ENCODE measurements at regions of chr4 and their contacts with region 1.

Region 1: DNA sequence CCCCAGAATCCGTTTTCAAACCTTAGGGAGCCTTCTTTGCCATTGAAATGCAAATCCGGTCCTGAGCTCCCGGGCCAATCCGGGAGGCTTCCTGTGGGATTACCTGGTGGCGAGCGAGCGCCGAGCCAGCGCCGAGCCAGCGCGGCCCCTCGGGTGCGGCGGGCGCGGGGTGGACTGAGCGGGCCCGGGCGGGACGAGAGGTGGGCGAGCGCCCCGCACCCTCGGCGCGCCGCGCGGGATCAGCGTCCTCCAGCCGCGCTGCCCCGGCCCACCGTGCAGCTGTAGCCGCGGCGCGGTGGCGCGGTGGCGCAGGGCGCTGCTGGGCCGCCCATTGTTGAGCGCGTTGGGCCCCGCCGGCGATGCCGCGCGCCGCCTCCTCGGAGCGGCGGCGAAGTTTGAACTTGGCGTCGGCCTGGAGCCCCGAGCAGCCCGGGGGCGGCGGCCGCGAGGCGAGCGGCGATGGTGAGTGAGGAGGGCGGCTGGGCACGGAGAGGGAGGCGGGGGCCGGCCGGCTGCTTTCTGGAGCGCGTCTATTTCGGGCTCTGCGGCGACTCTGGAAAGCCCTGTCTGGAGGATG is 208.6 kb downstream of the SOWAHB start:
- DNase-seq: peak; percentile 78
- H3K4me3 ChIP-seq: peak overlapping the region; percentile 79 to 81
- H3K27ac ChIP-seq: peak overlapping the region; percentile 78 to 99
- H3K4me1 ChIP-seq: peaks cover 12 to 28% of the 10 kb centered on the region in 2 experiments
- H3K27me3 ChIP-seq: no peaks in the 10 kb centered on the region
- CTCF ChIP-seq: no peak
- EP300 ChIP-seq: no peak
- RAD21 ChIP-seq: no peak; the same call in 1 of the 2 replicates

Region 2: GRCh38 chr4:76579610-76580375 is 109.5 kb before region 1 on chr4:
- CTCF ChIA-PET with region 1: interaction called, 4 read pairs
- POLR2A ChIA-PET with region 1: interaction called, 16 read pairs
- DNase-seq: peak; percentile 34
- H3K4me3 ChIP-seq: peak overlapping the region; percentile 18 to 21; a peak in 3 of 4 replicates
- H3K27ac ChIP-seq: peak overlapping the region; percentile 4 to 100; a peak in 3 of 4 replicates
- H3K4me1 ChIP-seq: peaks cover 19 to 42% of the 10 kb centered on the region in 2 experiments
- H3K27me3 ChIP-seq: no peaks in the 10 kb centered on the region
- CTCF ChIP-seq: no peak
- EP300 ChIP-seq: peak; percentile 39 to 88; a peak in 3 of 4 replicates
- RAD21 ChIP-seq: no peak; the same call in 1 of the 2 replicates

Region 3: GRCh38 chr4:76665139-76665538 is 24.2 kb before region 1 on chr4:
- CTCF ChIA-PET with region 1: no interaction called
- POLR2A ChIA-PET with region 1: no interaction called
- DNase-seq: no peak
- H3K4me3 ChIP-seq: no peak overlapping the region
- H3K27ac ChIP-seq: no peak overlapping the region
- H3K4me1 ChIP-seq: peaks cover 0 to 4% of the 10 kb centered on the region in 2 experiments; a peak in 1 of 4 replicates
- H3K27me3 ChIP-seq: no peaks in the 10 kb centered on the region
- CTCF ChIP-seq: no peak
- EP300 ChIP-seq: no peak
- RAD21 ChIP-seq: no peak

Region 4: DNA sequence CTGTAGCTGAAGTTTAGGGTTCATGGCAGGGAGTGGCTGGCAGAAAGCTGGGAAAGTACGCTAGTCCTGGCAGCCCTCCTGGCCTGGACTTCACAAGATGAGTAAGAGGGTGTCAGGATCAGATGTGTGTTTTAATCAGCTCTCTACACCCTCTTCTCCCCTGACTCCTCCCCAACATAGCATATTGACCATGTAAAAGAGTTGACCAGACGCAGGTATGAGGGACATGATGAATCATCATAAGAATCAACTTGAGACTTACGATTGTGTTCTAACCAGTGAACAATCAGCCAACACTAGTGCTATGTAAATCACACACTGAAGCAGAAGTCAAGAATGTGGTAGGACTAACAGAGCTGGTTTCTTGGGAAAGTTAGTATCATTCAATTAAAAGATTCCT is 203.3 kb after region 1 on chr4:
- CTCF ChIA-PET with region 1: no interaction called
- POLR2A ChIA-PET with region 1: no interaction called
- DNase-seq: no peak
- H3K4me3 ChIP-seq: no peak overlapping the region
- H3K27ac ChIP-seq: no peak overlapping the region
- H3K4me1 ChIP-seq: peaks cover 0 to 8% of the 10 kb centered on the region in 2 experiments; a peak in 1 of 4 replicates
- H3K27me3 ChIP-seq: peaks cover 22% of the 10 kb centered on the region
- CTCF ChIP-seq: no peak
- EP300 ChIP-seq: no peak
- RAD21 ChIP-seq: no peak

Measured in SK-N-SH (cell line).